Calu3 (cell line): ENCODE measurements at regions of chr16 and their contacts with region 1.

Region 1: DNA sequence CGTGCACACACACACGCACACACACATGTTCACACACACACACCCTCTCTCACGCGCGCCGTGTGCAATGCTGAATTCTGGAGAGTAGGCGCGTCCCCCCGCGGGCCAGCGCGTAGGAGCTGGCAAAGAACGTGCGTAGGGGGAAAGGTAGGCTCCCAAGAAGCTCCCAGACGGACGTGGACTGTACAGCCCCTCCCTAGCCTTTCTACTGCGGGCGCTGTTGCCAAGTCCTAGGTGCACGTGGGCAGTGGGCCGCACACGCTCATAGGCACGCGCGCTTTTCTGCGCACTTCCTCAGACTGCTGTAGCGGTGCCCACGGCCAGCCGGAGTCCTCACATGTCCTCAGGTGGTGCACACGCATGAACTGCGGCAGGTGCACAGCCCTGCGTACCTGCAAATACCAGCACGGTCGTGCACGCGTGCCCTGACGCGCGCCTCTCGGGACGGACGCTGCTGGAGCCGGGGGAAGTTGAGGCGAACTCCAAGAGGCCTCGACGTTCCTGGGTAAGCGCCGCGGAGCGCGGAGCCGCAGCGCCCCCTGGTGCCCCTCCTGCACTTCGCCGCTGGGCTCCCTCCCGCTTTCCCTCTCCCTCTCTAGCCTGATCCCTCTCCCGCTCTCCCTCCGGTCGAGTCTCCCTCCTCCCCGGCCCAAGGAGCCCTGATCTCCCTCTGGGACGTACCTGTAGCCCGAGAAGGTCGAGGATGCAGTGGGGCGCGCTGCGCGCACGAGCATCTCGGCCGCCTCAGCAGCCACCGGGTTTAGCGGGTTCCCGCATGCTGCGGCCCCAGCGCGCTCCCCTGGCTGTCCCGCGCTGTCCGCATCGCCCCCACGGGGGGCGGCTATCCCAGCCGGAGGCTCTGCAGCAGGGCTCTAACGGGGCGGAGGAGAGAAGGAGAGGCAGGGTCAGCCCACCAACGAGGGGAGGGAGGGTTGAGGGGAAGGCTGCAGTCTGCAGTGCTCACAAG is 749 bp downstream of the GRIN2A start:
- DNase-seq: peak; percentile 93
- H3K4me3 Mint-ChIP-seq: peak overlapping the region; percentile 82
- H3K27ac Mint-ChIP-seq: no peak overlapping the region
- H3K4me1 Mint-ChIP-seq: peaks cover 41% of the 10 kb centered on the region
- H3K27me3 Mint-ChIP-seq: no peaks in the 10 kb centered on the region
- CTCF ChIP-seq: peak; percentile 98

Region 2: GRCh38 chr16:9258423-9259051 is 922.9 kb before region 1 on chr16:
- CTCF ChIA-PET with region 1: no interaction called
- intact Hi-C with region 1: loop called (anchors 5 kb)
- DNase-seq: peak; percentile 61
- H3K4me3 Mint-ChIP-seq: no peak overlapping the region
- H3K27ac Mint-ChIP-seq: no peak overlapping the region
- H3K4me1 Mint-ChIP-seq: peaks cover 27% of the 10 kb centered on the region
- H3K27me3 Mint-ChIP-seq: peaks cover 37% of the 10 kb centered on the region
- CTCF ChIP-seq: peak; percentile 81

Region 3: DNA sequence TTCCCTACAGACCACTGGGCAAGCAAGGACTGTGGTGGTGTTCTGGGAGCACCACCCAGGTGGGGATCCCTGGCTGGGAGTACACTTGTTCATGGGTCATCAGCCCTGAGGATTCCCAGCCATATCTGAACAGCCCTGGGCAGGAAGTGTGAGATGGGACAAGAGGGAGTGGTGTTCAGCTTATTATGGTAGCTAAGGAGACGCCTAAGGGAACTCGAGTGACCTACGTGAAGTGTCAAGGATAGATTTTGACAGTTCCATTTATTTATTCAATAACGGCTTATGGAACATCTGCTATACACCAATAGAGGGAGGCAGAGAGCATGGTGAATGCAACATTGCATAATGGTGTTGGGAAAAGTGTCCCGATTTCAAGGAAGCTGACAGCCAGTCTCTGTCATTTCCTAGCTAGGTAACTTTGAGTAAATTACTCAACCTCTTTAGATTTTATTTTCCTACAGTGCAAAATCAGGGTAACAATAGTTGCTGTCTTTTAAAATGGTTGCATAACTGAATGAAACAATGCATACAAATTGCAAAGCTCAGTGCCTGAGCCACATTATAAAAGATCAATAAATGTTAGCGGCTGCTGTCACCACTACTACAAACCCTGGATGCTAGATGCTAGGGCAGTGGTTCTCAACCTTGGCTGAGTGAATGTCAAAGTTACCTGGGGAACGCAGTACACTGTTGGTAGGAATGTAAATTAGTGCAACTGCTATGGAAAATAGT is 533.3 kb before region 1 on chr16:
- CTCF ChIA-PET with region 1: interaction called, 12 read pairs
- intact Hi-C with region 1: loop called (anchors 1 kb)
- DNase-seq: peak; percentile 53
- H3K4me3 Mint-ChIP-seq: no peak overlapping the region
- H3K27ac Mint-ChIP-seq: no peak overlapping the region
- H3K4me1 Mint-ChIP-seq: peaks cover 22% of the 10 kb centered on the region
- H3K27me3 Mint-ChIP-seq: no peaks in the 10 kb centered on the region
- CTCF ChIP-seq: peak; percentile 77

Region 4: DNA sequence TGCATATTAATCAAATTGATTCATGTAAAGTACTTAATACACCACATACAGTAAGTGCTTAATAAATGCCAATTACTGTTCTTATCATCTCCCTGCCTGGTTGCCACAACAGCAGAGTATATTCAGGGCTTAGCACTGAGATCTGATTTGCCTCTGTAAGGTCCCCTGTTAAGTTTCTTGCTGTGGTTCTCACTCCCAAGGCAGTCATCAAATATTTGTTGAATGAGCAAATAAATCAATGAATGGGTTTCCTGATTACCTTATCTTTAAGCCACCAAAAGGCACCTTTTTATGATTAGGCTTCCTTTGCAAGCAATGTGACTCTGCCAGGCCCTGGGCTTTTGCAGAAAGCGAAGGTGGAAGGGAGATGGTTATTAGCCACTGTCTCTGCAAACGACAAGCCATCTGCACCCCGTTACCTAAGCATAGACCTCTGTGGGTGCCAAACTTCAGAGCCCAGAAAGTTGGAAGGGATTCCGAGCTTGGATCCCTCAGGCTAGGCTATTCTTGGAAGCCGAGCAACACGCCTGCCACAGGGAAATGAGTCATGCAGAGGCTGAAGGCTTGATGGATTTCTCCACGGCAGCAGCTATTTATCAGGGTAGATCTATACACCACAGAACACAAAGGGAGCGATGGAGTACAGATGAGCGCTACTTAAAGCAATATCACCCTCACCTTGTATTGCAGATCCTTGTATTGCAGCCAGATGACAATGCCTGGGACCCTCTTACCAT is 101.3 kb before region 1 on chr16:
- CTCF ChIA-PET with region 1: interaction called, 5 read pairs
- intact Hi-C with region 1: loop called (anchors 2 kb)
- DNase-seq: peak; percentile 81
- H3K4me3 Mint-ChIP-seq: peak overlapping the region; percentile 54
- H3K27ac Mint-ChIP-seq: peak overlapping the region; percentile 94
- H3K4me1 Mint-ChIP-seq: peaks cover 88% of the 10 kb centered on the region
- H3K27me3 Mint-ChIP-seq: no peaks in the 10 kb centered on the region
- CTCF ChIP-seq: no peak

Region 5: GRCh38 chr16:10112021-10112420 is 69.5 kb before region 1 on chr16:
- CTCF ChIA-PET with region 1: no interaction called
- intact Hi-C with region 1: no loop called
- DNase-seq: no peak
- H3K4me3 Mint-ChIP-seq: no peak overlapping the region
- H3K27ac Mint-ChIP-seq: no peak overlapping the region
- H3K4me1 Mint-ChIP-seq: peaks cover 14% of the 10 kb centered on the region
- H3K27me3 Mint-ChIP-seq: no peaks in the 10 kb centered on the region
- CTCF ChIP-seq: no peak

Region 6: GRCh38 chr16:10509534-10510025 is 328.1 kb after region 1 on chr16:
- CTCF ChIA-PET with region 1: interaction called, 11 read pairs
- intact Hi-C with region 1: no loop called
- DNase-seq: peak; percentile 87
- H3K4me3 Mint-ChIP-seq: no peak overlapping the region
- H3K27ac Mint-ChIP-seq: no peak overlapping the region
- H3K4me1 Mint-ChIP-seq: peaks cover 7% of the 10 kb centered on the region
- H3K27me3 Mint-ChIP-seq: no peaks in the 10 kb centered on the region
- CTCF ChIP-seq: peak; percentile 84